ENCODE measurements at regions of chr11 and their contacts with region 1.

Region 1: DNA sequence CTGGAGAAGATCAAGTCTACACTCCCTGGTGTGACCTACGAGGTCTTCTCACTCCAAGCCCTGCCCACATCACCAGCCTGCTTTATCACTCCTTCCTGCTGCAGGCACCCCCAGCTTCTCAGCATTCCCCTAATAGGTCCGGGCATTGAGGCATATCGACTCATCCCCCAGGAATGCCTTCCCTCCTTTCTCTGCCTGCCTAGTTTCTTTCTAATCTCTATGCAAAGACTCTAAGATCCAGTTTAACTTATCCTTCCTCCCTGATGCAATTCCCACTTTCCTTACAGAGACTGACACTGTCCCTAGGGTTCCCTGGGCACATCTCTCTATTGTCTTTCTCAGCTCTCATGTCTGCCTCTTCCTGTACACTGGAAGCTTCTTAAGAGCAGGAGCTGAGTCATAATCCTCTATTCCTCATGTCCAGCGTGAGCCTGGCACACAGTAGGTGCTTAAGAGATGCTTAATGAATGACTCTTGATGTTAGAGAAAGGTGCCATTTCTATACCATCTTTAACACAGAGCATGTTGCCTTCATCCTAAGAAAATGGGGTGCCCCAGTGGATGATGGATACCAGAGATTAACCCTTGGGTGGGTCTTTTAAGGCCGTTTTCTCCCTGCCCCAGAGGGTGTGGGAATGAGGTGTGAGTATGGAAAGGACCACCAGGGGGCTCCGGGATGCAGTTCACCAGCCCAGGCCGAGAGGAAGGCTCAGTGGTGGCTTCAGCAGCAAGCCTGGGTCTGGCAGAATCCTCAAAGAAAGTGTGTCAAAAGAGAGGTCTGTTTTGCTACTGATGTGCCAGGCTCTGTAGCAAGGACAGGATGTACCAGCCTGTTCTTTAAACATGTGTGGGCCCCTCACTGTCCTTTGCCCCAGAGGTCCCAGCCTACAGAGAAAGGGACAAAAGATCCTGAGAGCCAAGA is 34.7 kb downstream of the PARVA start:
- DNase-seq: peak; percentile 95
- H3K4me3 ChIP-seq: no peak overlapping the region
- H3K27ac ChIP-seq: peak overlapping the region; percentile 97 to 99 (median 98)
- H3K4me1 ChIP-seq: peaks cover 0 to 100% (median 92%) of the 10 kb centered on the region in 4 donors
- H3K27me3 ChIP-seq: no peaks in the 10 kb centered on the region
- CTCF ChIP-seq: peak in 3 of 4 experiments; percentile 75 to 89 (median 82)
- EP300 ChIP-seq: peak; percentile 89 to 98 (median 92)
- POLR2A ChIP-seq: no peak

Region 2: GRCh38 chr11:12377824-12378593 is 34.1 kb before region 1 on chr11:
- intact Hi-C with region 1: loop called (anchors 2 kb)
- DNase-seq: peak; percentile 94
- H3K4me3 ChIP-seq: peak overlapping the region; percentile 51 to 83 (median 72)
- H3K27ac ChIP-seq: peak overlapping the region; percentile 97 to 99 (median 98)
- H3K4me1 ChIP-seq: peaks cover 0 to 65% (median 57%) of the 10 kb centered on the region in 4 donors
- H3K27me3 ChIP-seq: no peaks in the 10 kb centered on the region
- CTCF ChIP-seq: no peak
- EP300 ChIP-seq: peak in 2 of 4 donors; percentile 58 to 86
- POLR2A ChIP-seq: peak; percentile 37 to 57

Region 3: DNA sequence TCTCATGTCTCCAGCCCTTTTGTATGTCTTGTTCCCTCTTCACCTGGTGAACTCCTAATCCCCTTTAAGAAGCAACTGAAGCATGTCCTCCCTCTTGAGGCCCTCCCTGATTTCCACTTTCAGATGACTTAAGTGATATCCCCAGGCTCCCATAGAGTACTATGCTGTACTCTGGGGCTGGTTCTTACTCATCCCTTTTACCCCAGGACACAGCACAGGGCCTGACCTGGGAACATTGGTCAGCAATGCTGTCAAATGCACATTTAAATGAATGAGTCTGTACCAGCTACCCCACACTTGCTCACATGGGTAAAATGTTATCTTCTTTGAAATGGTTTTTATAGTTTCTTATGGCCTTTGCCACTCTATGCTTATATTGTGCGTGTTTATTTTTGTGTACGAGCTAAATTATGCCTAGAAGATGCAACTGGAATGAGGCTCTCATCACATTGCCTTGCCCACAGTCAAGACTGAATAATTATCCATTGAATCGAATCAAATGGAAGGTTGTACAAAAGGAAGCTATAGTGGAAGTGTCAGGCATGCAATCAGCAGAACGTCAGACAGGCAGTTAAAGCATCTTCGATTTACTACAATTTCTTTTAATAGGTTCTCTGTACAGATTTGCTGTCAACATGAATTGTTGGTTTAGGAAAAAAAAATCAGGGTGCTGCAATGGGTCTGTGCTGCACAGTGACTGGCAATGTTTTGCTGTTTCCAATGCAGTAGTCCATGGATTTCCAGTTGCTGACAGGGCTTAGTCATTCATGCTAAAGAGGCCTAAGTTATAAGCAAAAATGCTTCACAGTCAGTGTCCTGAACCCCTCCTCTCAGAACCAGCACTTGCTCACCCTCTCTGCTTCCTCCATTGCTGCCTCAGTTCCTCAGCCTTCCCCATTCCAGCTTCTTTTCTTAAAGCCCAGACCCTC is 44.8 kb after region 1 on chr11:
- intact Hi-C with region 1: loop called (anchors 5 kb)
- DNase-seq: no peak
- H3K4me3 ChIP-seq: no peak overlapping the region
- H3K27ac ChIP-seq: peak overlapping the region; percentile 63 to 90 (median 80)
- H3K4me1 ChIP-seq: peaks cover 0 to 100% (median 92%) of the 10 kb centered on the region in 4 donors
- H3K27me3 ChIP-seq: no peaks in the 10 kb centered on the region
- CTCF ChIP-seq: no peak
- EP300 ChIP-seq: no peak
- POLR2A ChIP-seq: no peak

Region 4: DNA sequence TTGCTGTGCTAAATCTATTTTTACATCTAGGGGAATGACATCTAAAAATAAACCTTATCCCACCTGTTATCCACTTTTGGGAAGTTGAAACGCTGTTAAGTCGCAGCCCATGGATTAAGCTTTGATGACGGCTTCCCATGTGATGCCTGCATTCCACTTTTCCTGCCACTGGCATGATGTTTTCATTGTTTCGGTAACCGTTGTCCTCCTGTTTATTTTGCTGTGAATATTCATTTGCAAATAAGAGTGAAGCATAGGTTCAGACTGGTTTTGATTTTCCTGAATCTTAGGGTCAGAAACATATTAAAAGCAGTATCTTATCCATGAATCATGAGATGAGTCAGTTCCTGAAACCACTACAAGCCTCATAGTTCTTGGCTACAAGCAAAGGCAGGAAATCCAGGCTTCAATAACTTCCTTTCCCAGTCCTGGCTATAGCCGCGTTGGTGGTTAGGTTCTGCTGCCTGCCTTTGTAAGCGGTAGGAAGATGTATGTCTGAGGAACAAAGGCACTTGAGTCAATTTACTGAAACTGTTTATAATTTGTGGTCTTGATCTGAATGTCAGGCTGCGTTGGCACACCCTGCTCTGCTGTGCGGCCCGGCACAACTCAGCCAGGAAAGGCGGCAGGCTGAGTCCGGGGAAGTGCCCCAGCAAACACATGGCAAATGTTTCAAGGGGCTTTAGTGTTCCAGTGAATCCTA is 281.6 kb after region 1 on chr11:
- intact Hi-C with region 1: loop called (anchors 5 kb)
- DNase-seq: peak; percentile 84
- H3K4me3 ChIP-seq: peak overlapping the region in 3 of 4 donors; percentile 11 to 26 (median 19)
- H3K27ac ChIP-seq: peak overlapping the region; percentile 82 to 93 (median 91)
- H3K4me1 ChIP-seq: peaks cover 0 to 86% (median 83%) of the 10 kb centered on the region in 4 donors
- H3K27me3 ChIP-seq: no peaks in the 10 kb centered on the region
- CTCF ChIP-seq: no peak
- EP300 ChIP-seq: peak in 3 of 4 donors; percentile 9 to 25 (median 16)
- POLR2A ChIP-seq: no peak

Region 5: DNA sequence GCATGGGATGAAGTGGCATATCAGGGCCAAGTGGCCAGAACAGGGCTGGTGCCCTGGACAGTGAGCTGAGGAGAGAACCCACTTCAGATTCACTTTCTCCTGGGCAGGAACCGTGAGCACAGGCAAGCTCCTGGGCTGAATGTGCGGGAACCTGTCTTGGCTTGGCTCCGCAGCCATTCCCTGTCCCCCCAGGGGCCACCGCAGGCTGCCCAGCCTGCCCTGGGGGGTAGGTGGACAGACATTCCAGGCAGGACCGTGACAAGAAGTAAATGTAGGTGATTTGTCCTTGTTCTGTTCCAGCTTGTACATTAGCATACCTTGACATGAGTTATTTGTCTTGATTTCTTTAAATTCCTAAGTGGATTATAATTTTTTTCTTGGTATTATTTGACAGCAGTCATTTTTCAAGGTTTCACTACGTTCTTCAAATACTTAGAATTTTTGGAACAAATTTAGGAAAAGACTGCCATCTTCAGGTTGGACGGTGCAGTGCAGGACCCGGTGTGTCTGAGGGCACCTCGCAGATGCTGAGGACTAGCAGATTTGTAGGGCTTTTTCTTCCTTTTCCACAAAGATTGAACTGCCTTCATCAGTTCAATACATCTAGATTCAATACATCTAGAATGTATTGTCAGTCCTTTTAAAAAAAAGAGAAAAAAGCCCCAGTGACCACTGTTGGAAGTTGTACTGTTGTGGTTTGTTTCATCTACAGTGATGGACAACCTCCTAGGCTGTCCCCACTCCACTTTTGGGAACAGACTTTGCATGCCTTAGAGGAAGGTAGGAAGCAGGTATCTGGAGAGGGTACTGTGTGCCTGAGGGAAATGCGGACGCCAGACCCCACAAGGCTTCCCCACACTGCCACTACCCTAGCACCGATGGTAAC is 482.0 kb after region 1 on chr11:
- intact Hi-C with region 1: loop called (anchors 2 kb)
- DNase-seq: peak; percentile 82
- H3K4me3 ChIP-seq: no peak overlapping the region
- H3K27ac ChIP-seq: peak overlapping the region; percentile 18 to 91 (median 84)
- H3K4me1 ChIP-seq: peaks cover 0 to 74% (median 56%) of the 10 kb centered on the region in 4 donors
- H3K27me3 ChIP-seq: no peaks in the 10 kb centered on the region
- CTCF ChIP-seq: peak; percentile 90 to 93 (median 92)
- EP300 ChIP-seq: no peak
- POLR2A ChIP-seq: no peak

Measured in sigmoid colon (tissue), 7 donors.